Caco-2 (cell line): ENCODE measurements at regions of chr5 and their contacts with region 1.

Region 1: DNA sequence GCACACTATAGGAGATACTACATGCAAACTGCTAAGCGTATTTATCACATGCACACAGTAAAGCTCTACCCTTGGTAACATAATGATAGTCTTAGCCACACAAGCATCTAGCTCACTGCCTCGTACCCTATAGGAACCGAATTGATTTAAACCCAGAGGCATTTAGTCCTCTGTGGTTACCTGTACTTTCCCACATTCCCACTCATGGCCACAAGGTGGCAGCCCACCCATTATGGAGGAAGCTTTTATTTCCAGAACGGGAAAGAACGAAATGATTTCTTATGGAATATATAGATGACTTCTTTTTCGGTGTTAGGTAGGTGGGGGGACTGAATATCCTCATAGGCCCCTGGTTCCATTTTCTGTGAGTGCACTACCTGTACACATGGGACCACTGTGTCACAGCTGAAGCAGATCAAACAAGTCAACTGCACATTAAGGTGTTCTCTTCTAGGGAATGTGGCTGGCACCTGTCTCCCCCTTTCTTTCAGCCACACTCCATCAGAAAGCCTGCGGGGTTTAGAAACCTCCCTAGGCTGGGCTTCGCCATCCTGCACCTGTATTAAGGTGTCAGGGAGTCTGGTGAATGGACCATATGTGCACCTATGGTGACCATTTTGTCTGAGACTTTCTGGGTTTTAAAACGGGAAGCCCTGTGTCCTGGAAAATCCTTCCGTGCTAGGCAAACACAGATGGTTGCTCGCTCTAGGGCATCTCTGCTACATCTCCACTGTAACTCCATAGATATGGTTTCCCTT is 313.2 kb downstream of the SLIT3 start:
- DNase-seq: peak; percentile 71 to 81
- H3K4me3 ChIP-seq: no peak overlapping the region
- H3K4me3 Mint-ChIP-seq: peak overlapping the region; percentile 43
- H3K27ac Mint-ChIP-seq: no peak overlapping the region
- H3K4me1 ChIP-seq: peaks cover 21% of the 10 kb centered on the region
- H3K4me1 Mint-ChIP-seq: peaks cover 40% of the 10 kb centered on the region
- H3K27me3 ChIP-seq: no peaks in the 10 kb centered on the region
- H3K27me3 Mint-ChIP-seq: no peaks in the 10 kb centered on the region
- CTCF ChIP-seq: peak; percentile 86 to 92

Region 2: GRCh38 chr5:169063310-169063953 is 75.7 kb after region 1 on chr5:
- CTCF ChIA-PET with region 1: no interaction called
- POLR2A ChIA-PET with region 1: no interaction called
- intact Hi-C with region 1: loop called (anchors 2 kb)
- DNase-seq: no peak
- H3K4me3 ChIP-seq: no peak overlapping the region
- H3K4me3 Mint-ChIP-seq: peak overlapping the region; percentile 30
- H3K27ac Mint-ChIP-seq: peak overlapping the region; percentile 69
- H3K4me1 ChIP-seq: peaks cover 25% of the 10 kb centered on the region
- H3K4me1 Mint-ChIP-seq: peaks cover 14% of the 10 kb centered on the region
- H3K27me3 ChIP-seq: no peaks in the 10 kb centered on the region
- H3K27me3 Mint-ChIP-seq: no peaks in the 10 kb centered on the region
- CTCF ChIP-seq: no peak

Region 3: DNA sequence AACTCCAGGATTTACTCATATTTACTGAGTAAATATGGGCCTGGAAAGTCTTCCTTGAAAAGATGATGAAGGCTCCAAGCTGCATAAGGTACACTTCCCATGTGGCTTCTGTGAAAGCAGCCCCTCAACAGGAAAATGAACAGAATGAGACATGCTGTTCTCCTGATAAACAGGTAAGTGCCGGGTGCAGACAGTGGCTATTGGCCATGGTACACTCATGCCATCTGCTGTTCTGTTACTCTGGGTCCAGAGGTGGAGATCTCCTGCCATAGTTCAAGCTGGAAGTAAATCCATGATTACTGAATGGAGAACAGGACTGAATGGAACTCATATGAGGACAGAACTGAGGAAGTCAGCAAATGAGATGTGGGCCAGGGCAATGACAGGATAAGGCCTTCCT is 209.6 kb after region 1 on chr5:
- CTCF ChIA-PET with region 1: interaction called, 5 read pairs
- POLR2A ChIA-PET with region 1: no interaction called
- intact Hi-C with region 1: loop called (anchors 1 kb)
- DNase-seq: peak in 1 of 2 experiments; percentile 21
- H3K4me3 ChIP-seq: no peak overlapping the region
- H3K4me3 Mint-ChIP-seq: no peak overlapping the region
- H3K27ac Mint-ChIP-seq: no peak overlapping the region
- H3K4me1 ChIP-seq: no peaks in the 10 kb centered on the region
- H3K4me1 Mint-ChIP-seq: no peaks in the 10 kb centered on the region
- H3K27me3 ChIP-seq: no peaks in the 10 kb centered on the region
- H3K27me3 Mint-ChIP-seq: no peaks in the 10 kb centered on the region
- CTCF ChIP-seq: peak in 1 of 2 experiments; percentile 32

Region 4: GRCh38 chr5:169272731-169273401 is 285.1 kb after region 1 on chr5:
- CTCF ChIA-PET with region 1: no interaction called
- POLR2A ChIA-PET with region 1: no interaction called
- intact Hi-C with region 1: loop called (anchors 1 kb)
- DNase-seq: no peak
- H3K4me3 ChIP-seq: no peak overlapping the region
- H3K4me3 Mint-ChIP-seq: peak overlapping the region; percentile 61
- H3K27ac Mint-ChIP-seq: peak overlapping the region; percentile 90
- H3K4me1 ChIP-seq: peaks cover 53% of the 10 kb centered on the region
- H3K4me1 Mint-ChIP-seq: peaks cover 62% of the 10 kb centered on the region
- H3K27me3 ChIP-seq: no peaks in the 10 kb centered on the region
- H3K27me3 Mint-ChIP-seq: no peaks in the 10 kb centered on the region
- CTCF ChIP-seq: no peak

Region 5: GRCh38 chr5:169577951-169578350 is 590.2 kb after region 1 on chr5:
- CTCF ChIA-PET with region 1: interaction called, 4 read pairs
- POLR2A ChIA-PET with region 1: no interaction called
- intact Hi-C with region 1: loop called (anchors 1 kb)
- DNase-seq: peak in 1 of 2 experiments; percentile 44
- H3K4me3 ChIP-seq: no peak overlapping the region
- H3K4me3 Mint-ChIP-seq: no peak overlapping the region
- H3K27ac Mint-ChIP-seq: no peak overlapping the region
- H3K4me1 ChIP-seq: peaks cover 9% of the 10 kb centered on the region
- H3K4me1 Mint-ChIP-seq: peaks cover 22% of the 10 kb centered on the region
- H3K27me3 ChIP-seq: no peaks in the 10 kb centered on the region
- H3K27me3 Mint-ChIP-seq: no peaks in the 10 kb centered on the region
- CTCF ChIP-seq: peak; percentile 57 to 70